Dorsolateral prefrontal cortex (tissue), 120 donors: ENCODE measurements at regions of chr22 and their contacts with region 1.

Region 1: DNA sequence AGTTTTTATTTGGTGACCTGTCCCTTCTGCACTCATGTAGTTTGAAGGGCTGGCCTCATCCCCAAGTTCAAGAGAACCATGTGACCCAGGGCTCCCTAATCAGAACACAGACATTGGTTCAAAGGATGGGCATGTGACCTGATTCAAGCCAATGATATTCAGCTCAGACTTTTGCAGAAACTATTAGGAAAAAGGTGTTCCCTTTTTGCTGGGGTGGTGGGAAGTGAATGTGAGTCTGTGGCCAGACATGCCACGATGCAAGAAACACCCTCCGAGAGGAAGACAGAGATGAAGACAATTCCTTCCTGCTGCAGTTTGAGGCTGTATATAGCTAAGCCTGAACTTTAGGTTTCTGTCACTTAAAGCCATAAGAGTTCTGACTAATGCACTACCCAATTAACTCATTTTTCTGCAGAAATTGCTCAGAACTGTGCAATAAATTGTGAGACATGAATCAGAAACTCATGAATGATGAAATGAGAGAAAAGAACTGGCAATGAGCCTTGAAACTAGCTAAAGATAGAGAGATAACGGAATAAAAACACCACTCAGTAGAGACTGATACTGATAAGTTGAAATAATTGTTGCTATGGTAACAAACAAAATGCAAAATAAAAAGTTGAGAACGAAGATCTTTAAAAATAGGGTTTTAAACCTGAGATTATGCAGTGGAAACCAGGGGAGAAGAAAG is 9.2 kb upstream of the MAPK1 start:
- DNase-seq: no peak
- H3K4me3 ChIP-seq: no peak overlapping the region
- H3K27ac ChIP-seq: no peak overlapping the region
- H3K27me3 ChIP-seq: no peaks in the 10 kb centered on the region
- CTCF ChIP-seq: no peak

Region 2: GRCh38 chr22:21726650-21727049 is 150.0 kb before region 1 on chr22:
- intact Hi-C with region 1: no loop called
- DNase-seq: peak in 1 of 10 donors; percentile 21
- H3K4me3 ChIP-seq: no peak overlapping the region
- H3K27ac ChIP-seq: peak overlapping the region in 1 of 59 donors; percentile 7
- H3K27me3 ChIP-seq: no peaks in the 10 kb centered on the region
- CTCF ChIP-seq: peak in 19 of 56 donors; percentile 5 to 41 (median 21)

Region 3: DNA sequence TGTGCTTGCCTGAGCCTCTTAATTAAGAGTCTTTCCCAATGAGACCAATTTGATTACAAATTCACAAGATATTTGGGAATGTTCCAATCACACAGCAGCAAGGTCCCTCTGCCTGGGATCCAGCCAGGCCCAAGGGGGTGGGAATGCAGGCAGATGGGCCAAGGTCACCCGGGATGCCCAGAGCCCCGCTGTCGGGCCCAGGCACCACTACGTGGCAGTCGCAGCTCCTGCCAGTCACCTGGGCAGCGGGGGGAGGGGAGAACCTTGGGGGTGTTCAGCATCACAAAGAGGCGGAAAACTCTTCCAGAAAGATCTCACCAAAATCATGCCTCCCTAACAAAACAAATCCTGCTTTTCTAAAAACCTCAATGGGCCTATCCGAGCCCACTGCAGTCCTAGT is 45.1 kb after region 1 on chr22:
- intact Hi-C with region 1: loop called in 1 of 2 experiments (anchors 5 kb)
- DNase-seq: no peak
- H3K4me3 ChIP-seq: no peak overlapping the region
- H3K27ac ChIP-seq: peak overlapping the region in 10 of 59 donors; percentile 1 to 52 (median 10)
- H3K27me3 ChIP-seq: no peaks in the 10 kb centered on the region
- CTCF ChIP-seq: no peak